ENCODE measurements at regions of chr2 and their contacts with region 1.

Region 1: GRCh38 chr2:118221666-118222594 is 133.7 kb downstream of the INSIG2 start:
- DNase-seq: no peak
- ATAC-seq: peak; percentile 79
- H3K4me3 ChIP-seq: no peak overlapping the region
- H3K27ac ChIP-seq: no peak overlapping the region
- H3K4me1 ChIP-seq: peaks cover 15% of the 10 kb centered on the region; the same call in 1 of the 2 replicates
- H3K27me3 ChIP-seq: no peaks in the 10 kb centered on the region
- CTCF ChIP-seq: peak; percentile 61 to 88 (median 64)
- EP300 ChIP-seq: no peak
- POLR2A ChIP-seq: no peak
- RAD21 ChIP-seq: peak; percentile 91

Region 2: DNA sequence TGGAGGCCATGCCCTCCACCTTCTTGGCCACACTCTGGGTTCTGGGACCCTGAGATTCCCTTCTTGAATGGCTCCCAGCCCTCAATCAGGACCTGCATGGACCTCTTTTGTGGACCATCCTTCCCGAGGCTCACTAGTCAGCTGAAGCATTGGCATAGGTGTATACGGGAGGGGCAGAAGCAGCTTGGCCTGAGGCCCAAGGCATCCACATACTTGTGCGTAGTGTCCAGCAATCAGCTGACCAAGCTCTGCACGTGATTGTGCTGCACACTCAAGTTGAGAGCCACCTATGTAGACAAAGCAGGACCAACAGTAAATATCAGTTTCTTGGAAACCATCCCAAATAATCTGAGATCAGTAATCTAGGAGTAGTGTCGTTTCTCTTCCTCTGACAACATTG is 14.0 kb before region 1 on chr2:
- CTCF ChIA-PET with region 1: interaction called, 20 read pairs
- POLR2A ChIA-PET with region 1: no interaction called
- RAD21 ChIA-PET with region 1: no interaction called
- SMC1A ChIA-PET with region 1: interaction called, 3 read pairs
- in situ Hi-C with region 1: no loop called
- intact Hi-C with region 1: no loop called
- DNase-seq: no peak
- ATAC-seq: no peak
- H3K4me3 ChIP-seq: no peak overlapping the region
- H3K27ac ChIP-seq: no peak overlapping the region
- H3K4me1 ChIP-seq: no peaks in the 10 kb centered on the region
- H3K27me3 ChIP-seq: no peaks in the 10 kb centered on the region; a peak in 3 of 4 replicates
- CTCF ChIP-seq: no peak
- EP300 ChIP-seq: no peak
- POLR2A ChIP-seq: no peak
- RAD21 ChIP-seq: no peak

Region 3: GRCh38 chr2:118269408-118270051 is 47.6 kb after region 1 on chr2:
- CTCF ChIA-PET with region 1: interaction called, 13 read pairs
- POLR2A ChIA-PET with region 1: no interaction called
- RAD21 ChIA-PET with region 1: no interaction called
- SMC1A ChIA-PET with region 1: interaction called, 5 read pairs
- in situ Hi-C with region 1: no loop called
- intact Hi-C with region 1: loop called (anchors 1 kb)
- DNase-seq: no peak
- ATAC-seq: peak; percentile 77
- H3K4me3 ChIP-seq: no peak overlapping the region
- H3K27ac ChIP-seq: no peak overlapping the region
- H3K4me1 ChIP-seq: no peaks in the 10 kb centered on the region
- H3K27me3 ChIP-seq: no peaks in the 10 kb centered on the region
- CTCF ChIP-seq: peak; percentile 41 to 50 (median 45); a peak in 4 of 6 replicates
- EP300 ChIP-seq: no peak
- POLR2A ChIP-seq: no peak
- RAD21 ChIP-seq: peak; percentile 55

Region 4: DNA sequence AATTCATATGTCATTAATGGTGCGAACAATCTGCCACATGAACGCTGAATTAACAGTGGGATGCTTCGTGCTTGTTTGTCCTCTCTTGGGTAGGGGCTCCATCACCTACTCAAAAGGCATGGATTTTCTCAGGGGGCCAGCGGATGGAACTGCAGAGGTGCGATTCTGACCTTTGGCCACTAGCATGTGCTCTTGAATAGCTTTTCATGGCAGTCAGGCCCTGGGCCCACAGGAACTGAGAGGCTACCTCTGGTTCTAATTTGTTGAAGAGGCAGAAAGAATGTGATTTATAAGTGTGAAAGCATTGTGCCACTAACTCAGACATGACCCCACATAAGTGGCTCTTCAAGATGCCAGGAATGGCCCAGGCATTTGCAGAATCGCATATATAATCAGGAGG is 149.6 kb after region 1 on chr2:
- CTCF ChIA-PET with region 1: interaction called, 3 read pairs
- POLR2A ChIA-PET with region 1: no interaction called
- RAD21 ChIA-PET with region 1: no interaction called
- SMC1A ChIA-PET with region 1: no interaction called
- in situ Hi-C with region 1: no loop called
- intact Hi-C with region 1: loop called (anchors 5 kb)
- DNase-seq: no peak
- ATAC-seq: peak; percentile 76
- H3K4me3 ChIP-seq: no peak overlapping the region
- H3K27ac ChIP-seq: no peak overlapping the region
- H3K4me1 ChIP-seq: no peaks in the 10 kb centered on the region
- H3K27me3 ChIP-seq: no peaks in the 10 kb centered on the region
- CTCF ChIP-seq: peak; percentile 48 to 60 (median 60); a peak in 5 of 6 replicates
- EP300 ChIP-seq: no peak
- POLR2A ChIP-seq: no peak
- RAD21 ChIP-seq: peak; percentile 63

Region 5: GRCh38 chr2:118855451-118856279 is 633.7 kb after region 1 on chr2:
- CTCF ChIA-PET with region 1: interaction called, 47 read pairs
- POLR2A ChIA-PET with region 1: no interaction called
- RAD21 ChIA-PET with region 1: interaction called, 21 read pairs
- SMC1A ChIA-PET with region 1: interaction called, 4 read pairs
- in situ Hi-C with region 1: loop called (anchors 5 kb)
- intact Hi-C with region 1: loop called (anchors 1 kb)
- DNase-seq: no peak
- ATAC-seq: peak; percentile 98
- H3K4me3 ChIP-seq: no peak overlapping the region; the same call in 1 of the 2 replicates
- H3K27ac ChIP-seq: no peak overlapping the region
- H3K4me1 ChIP-seq: no peaks in the 10 kb centered on the region
- H3K27me3 ChIP-seq: peaks cover 18 to 35% of the 10 kb centered on the region in 2 experiments
- CTCF ChIP-seq: peak; percentile 88 to 94 (median 88)
- EP300 ChIP-seq: no peak
- POLR2A ChIP-seq: no peak
- RAD21 ChIP-seq: peak; percentile 81

Measured in GM12878 (cell line).